Endothelial cell of umbilical vein (primary cell): ENCODE measurements at regions of chr18 and their contacts with region 1.

Region 1: GRCh38 chr18:24600076-24600654 is 139.7 kb downstream of the HRH4 start:
- DNase-seq: peak; percentile 76
- H3K4me3 ChIP-seq: no peak overlapping the region
- H3K27ac ChIP-seq: no peak overlapping the region
- H3K4me1 ChIP-seq: no peaks in the 10 kb centered on the region
- H3K27me3 ChIP-seq: peaks cover 23 to 27% of the 10 kb centered on the region in 2 experiments
- CTCF ChIP-seq: peak; percentile 42 to 54
- POLR2A ChIP-seq: no peak

Region 2: DNA sequence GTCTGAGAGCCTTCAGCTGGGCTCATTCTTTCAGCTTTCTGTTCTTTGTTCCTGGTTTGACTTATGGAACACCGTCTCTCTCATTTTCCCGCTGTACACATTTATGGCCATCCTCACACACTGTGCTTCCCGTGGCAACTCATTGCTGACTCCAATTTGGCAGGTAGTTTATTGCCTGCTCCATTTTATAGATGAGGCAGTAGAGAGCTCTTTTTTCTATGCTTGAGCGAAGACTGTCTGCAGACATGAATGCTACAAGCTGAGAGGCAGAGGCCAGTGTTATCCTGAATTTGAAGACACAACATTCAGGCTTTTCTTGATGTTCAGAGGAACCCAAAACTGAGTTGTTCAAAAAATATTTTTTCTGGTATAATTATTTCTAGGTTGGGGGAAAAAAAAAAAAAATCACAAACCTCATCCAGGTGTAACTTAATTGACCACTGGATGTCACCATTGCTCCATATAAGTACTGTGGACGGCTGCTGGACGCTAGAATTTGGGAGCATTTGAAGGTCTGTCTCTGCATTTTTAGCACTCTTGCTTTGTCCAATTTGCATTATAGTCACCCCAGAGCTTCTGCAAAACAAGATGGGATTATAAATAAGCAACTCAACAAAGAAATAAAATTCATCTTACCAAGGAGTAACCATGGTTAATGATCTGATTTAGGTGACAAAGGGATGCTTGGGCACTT is 56.2 kb before region 1 on chr18:
- CTCF ChIA-PET with region 1: interaction called, 3 read pairs
- POLR2A ChIA-PET with region 1: no interaction called
- dilution Hi-C with region 1: no loop called
- intact Hi-C with region 1: loop called (anchors 2 kb)
- DNase-seq: peak; percentile 42
- H3K4me3 ChIP-seq: no peak overlapping the region
- H3K27ac ChIP-seq: no peak overlapping the region
- H3K4me1 ChIP-seq: no peaks in the 10 kb centered on the region
- H3K27me3 ChIP-seq: peaks cover 5 to 7% of the 10 kb centered on the region in 2 experiments
- CTCF ChIP-seq: peak; percentile 30 to 32
- POLR2A ChIP-seq: no peak

Region 3: GRCh38 chr18:24862201-24862816 is 262.1 kb after region 1 on chr18:
- CTCF ChIA-PET with region 1: no interaction called
- POLR2A ChIA-PET with region 1: no interaction called
- dilution Hi-C with region 1: no loop called
- intact Hi-C with region 1: loop called (anchors 5 kb)
- DNase-seq: peak; percentile 63
- H3K4me3 ChIP-seq: peak overlapping the region in 1 of 3 experiments; percentile 29
- H3K27ac ChIP-seq: peak overlapping the region; percentile 89
- H3K4me1 ChIP-seq: peaks cover 32% of the 10 kb centered on the region
- H3K27me3 ChIP-seq: no peaks in the 10 kb centered on the region
- CTCF ChIP-seq: no peak
- POLR2A ChIP-seq: no peak

Region 4: GRCh38 chr18:25058521-25058920 is 458.4 kb after region 1 on chr18:
- CTCF ChIA-PET with region 1: no interaction called
- POLR2A ChIA-PET with region 1: no interaction called
- dilution Hi-C with region 1: no loop called
- intact Hi-C with region 1: loop called (anchors 10 kb)
- DNase-seq: no peak
- H3K4me3 ChIP-seq: no peak overlapping the region
- H3K27ac ChIP-seq: no peak overlapping the region
- H3K4me1 ChIP-seq: peaks cover 17% of the 10 kb centered on the region
- H3K27me3 ChIP-seq: no peaks in the 10 kb centered on the region
- CTCF ChIP-seq: no peak
- POLR2A ChIP-seq: no peak

Region 5: GRCh38 chr18:25896178-25896780 is 1296.1 kb after region 1 on chr18:
- CTCF ChIA-PET with region 1: interaction called, 9 read pairs
- POLR2A ChIA-PET with region 1: no interaction called
- dilution Hi-C with region 1: no loop called
- intact Hi-C with region 1: loop called (anchors 1 kb)
- DNase-seq: peak; percentile 62
- H3K4me3 ChIP-seq: no peak overlapping the region
- H3K27ac ChIP-seq: no peak overlapping the region
- H3K4me1 ChIP-seq: no peaks in the 10 kb centered on the region
- H3K27me3 ChIP-seq: peaks cover 8 to 13% of the 10 kb centered on the region in 2 experiments
- CTCF ChIP-seq: peak; percentile 61 to 77
- POLR2A ChIP-seq: no peak